B cell (primary cell): ENCODE measurements at regions of chrX and their contacts with region 1.

Region 1: GRCh38 chrX:81174286-81174685 is 27.4 kb downstream of the HMGN5 start:
- DNase-seq: peak; percentile 34
- ATAC-seq: peak; percentile 33
- H3K4me3 ChIP-seq: no peak overlapping the region
- H3K4me3 Mint-ChIP-seq: no peak overlapping the region
- H3K27ac ChIP-seq: no peak overlapping the region
- H3K27ac Mint-ChIP-seq: no peak overlapping the region
- H3K4me1 ChIP-seq: no peaks in the 10 kb centered on the region
- H3K4me1 Mint-ChIP-seq: no peaks in the 10 kb centered on the region
- H3K27me3 ChIP-seq: no peaks in the 10 kb centered on the region
- H3K27me3 Mint-ChIP-seq: no peaks in the 10 kb centered on the region
- CTCF ChIP-seq: peak; percentile 57

Region 2: DNA sequence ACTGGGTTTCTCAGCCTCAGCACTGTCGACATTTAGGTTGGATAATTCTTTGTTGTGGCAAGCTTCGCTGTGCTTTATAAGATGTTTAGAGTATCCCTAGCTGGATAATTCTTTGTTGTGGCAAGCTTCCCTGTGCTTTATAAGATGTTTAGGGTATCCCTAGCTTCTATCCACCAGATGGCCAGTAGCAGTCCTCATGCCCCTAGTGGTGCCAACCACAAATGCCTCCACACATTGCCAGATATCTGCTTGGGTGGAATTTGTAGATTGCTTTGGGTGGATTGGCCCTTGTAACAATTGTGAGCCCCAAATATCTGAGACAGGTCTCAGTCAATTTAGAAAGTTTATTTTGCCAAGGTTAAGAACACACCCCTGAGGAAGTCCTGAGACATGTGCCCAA is 770.8 kb before region 1 on chrX:
- CTCF ChIA-PET with region 1: no interaction called
- POLR2A ChIA-PET with region 1: no interaction called
- intact Hi-C with region 1: no loop called
- DNase-seq: no peak
- ATAC-seq: no peak
- H3K4me3 ChIP-seq: no peak overlapping the region
- H3K4me3 Mint-ChIP-seq: no peak overlapping the region
- H3K27ac ChIP-seq: no peak overlapping the region
- H3K27ac Mint-ChIP-seq: no peak overlapping the region
- H3K4me1 ChIP-seq: no peaks in the 10 kb centered on the region
- H3K4me1 Mint-ChIP-seq: no peaks in the 10 kb centered on the region
- H3K27me3 ChIP-seq: no peaks in the 10 kb centered on the region
- H3K27me3 Mint-ChIP-seq: no peaks in the 10 kb centered on the region
- CTCF ChIP-seq: no peak

Region 3: GRCh38 chrX:81377329-81377728 is 203.0 kb after region 1 on chrX:
- CTCF ChIA-PET with region 1: interaction called, 26 read pairs
- POLR2A ChIA-PET with region 1: no interaction called
- intact Hi-C with region 1: loop called (anchors 1 kb)
- DNase-seq: peak; percentile 14
- ATAC-seq: no peak
- H3K4me3 ChIP-seq: no peak overlapping the region
- H3K4me3 Mint-ChIP-seq: no peak overlapping the region
- H3K27ac ChIP-seq: no peak overlapping the region
- H3K27ac Mint-ChIP-seq: no peak overlapping the region
- H3K4me1 ChIP-seq: no peaks in the 10 kb centered on the region
- H3K4me1 Mint-ChIP-seq: no peaks in the 10 kb centered on the region
- H3K27me3 ChIP-seq: no peaks in the 10 kb centered on the region
- H3K27me3 Mint-ChIP-seq: peaks cover 4% of the 10 kb centered on the region
- CTCF ChIP-seq: peak; percentile 66

Region 4: GRCh38 chrX:81818402-81818801 is 644.1 kb after region 1 on chrX:
- CTCF ChIA-PET with region 1: no interaction called
- POLR2A ChIA-PET with region 1: no interaction called
- intact Hi-C with region 1: no loop called
- DNase-seq: no peak
- ATAC-seq: no peak
- H3K4me3 ChIP-seq: no peak overlapping the region
- H3K4me3 Mint-ChIP-seq: no peak overlapping the region
- H3K27ac ChIP-seq: no peak overlapping the region
- H3K27ac Mint-ChIP-seq: no peak overlapping the region
- H3K4me1 ChIP-seq: no peaks in the 10 kb centered on the region
- H3K4me1 Mint-ChIP-seq: no peaks in the 10 kb centered on the region
- H3K27me3 ChIP-seq: no peaks in the 10 kb centered on the region
- H3K27me3 Mint-ChIP-seq: no peaks in the 10 kb centered on the region
- CTCF ChIP-seq: no peak